ENCODE measurements at regions of chr11 and their contacts with region 1.

Region 1: GRCh38 chr11:126989942-126990715 is 10.4 kb downstream of the KIRREL3 start:
- DNase-seq: peak; percentile 53
- H3K4me3 ChIP-seq: peak overlapping the region in 1 of 3 experiments; percentile 8
- H3K27ac ChIP-seq: peak overlapping the region; percentile 90
- H3K4me1 ChIP-seq: peaks cover 29% of the 10 kb centered on the region
- H3K27me3 ChIP-seq: no peaks in the 10 kb centered on the region
- CTCF ChIP-seq: peak; percentile 95 to 99

Region 2: DNA sequence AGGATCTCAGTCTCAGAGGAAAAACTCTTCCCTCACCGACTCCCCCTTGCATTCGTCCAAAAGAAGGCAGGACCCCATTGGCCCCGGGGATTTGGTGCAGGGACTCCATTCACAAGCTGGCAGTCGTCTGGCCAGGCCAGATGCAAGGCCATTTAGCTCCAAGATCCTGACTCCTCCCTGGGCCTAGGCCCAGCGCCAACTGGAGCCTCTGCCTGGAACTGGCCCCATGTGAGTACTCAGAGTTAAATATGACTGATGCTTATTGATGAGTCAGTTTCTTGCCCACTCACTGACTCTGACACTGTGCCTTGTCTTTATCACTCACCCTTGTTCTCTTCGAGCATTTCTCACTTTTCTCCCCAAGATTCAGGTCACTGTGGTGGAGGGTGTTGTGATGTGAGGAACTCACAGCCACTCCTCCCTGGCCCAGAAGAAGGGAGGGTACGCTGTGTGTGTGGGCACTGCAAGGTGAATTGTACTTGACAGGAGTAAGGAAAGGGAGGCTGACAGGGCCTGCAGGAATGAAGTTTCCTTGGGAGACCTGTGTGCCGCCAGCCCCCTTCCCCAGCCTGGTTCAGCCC is 657.9 kb before region 1 on chr11:
- CTCF ChIA-PET with region 1: no interaction called
- dilution Hi-C with region 1: no loop called
- in situ Hi-C with region 1: loop called in 1 of 2 experiments (anchors 25 kb)
- intact Hi-C with region 1: no loop called
- DNase-seq: peak; percentile 82
- H3K4me3 ChIP-seq: no peak overlapping the region
- H3K27ac ChIP-seq: peak overlapping the region; percentile 15
- H3K4me1 ChIP-seq: peaks cover 13% of the 10 kb centered on the region
- H3K27me3 ChIP-seq: no peaks in the 10 kb centered on the region
- CTCF ChIP-seq: no peak

Region 3: DNA sequence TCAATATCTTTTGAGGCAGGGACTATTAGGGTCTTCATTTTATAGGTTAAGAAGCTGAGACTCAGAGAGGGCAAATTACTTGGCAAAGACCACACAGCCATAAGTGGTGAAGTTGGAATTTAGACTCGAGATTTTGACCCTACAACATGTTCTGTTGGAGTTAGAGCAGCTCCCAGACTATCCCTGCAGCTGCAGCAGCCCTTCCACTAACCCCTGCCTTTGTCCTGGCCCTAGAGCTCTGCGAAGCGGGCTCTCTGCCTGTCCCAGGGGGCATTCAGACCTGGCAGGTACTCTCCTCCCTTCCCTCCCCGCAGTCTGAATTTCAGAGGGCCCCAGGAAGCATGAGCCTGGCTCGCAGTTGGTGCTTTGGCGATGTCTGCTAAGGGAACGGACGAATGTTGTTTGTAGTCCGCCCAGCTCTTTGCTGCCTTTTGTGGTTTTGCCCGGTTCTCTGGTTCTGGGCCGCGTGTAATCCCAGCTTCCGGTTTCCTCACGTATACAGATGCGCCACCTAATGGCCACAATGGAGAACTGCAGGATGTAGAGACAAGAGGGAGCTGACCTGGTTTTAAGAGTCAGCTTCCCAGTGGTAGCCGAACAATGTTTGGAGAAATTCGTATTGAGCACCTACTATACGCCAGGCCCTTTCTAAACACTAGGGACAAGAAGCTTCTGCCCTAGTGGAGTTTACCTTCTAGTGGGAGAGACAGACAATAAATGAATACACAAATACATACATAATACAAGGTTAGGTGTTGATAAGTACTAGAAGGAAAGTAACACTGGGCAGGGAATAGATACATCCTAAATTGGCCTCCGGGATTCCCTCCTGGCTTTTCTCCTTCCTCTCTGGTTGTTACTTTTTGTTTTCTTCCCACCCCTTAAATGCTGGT is 509.5 kb before region 1 on chr11:
- CTCF ChIA-PET with region 1: interaction called, 9 read pairs
- dilution Hi-C with region 1: no loop called
- in situ Hi-C with region 1: loop called in 1 of 2 experiments (anchors 25 kb)
- intact Hi-C with region 1: loop called (anchors 1 kb)
- DNase-seq: peak; percentile 70
- H3K4me3 ChIP-seq: no peak overlapping the region
- H3K27ac ChIP-seq: no peak overlapping the region
- H3K4me1 ChIP-seq: peaks cover 4% of the 10 kb centered on the region
- H3K27me3 ChIP-seq: no peaks in the 10 kb centered on the region
- CTCF ChIP-seq: peak; percentile 94 to 97

Region 4: DNA sequence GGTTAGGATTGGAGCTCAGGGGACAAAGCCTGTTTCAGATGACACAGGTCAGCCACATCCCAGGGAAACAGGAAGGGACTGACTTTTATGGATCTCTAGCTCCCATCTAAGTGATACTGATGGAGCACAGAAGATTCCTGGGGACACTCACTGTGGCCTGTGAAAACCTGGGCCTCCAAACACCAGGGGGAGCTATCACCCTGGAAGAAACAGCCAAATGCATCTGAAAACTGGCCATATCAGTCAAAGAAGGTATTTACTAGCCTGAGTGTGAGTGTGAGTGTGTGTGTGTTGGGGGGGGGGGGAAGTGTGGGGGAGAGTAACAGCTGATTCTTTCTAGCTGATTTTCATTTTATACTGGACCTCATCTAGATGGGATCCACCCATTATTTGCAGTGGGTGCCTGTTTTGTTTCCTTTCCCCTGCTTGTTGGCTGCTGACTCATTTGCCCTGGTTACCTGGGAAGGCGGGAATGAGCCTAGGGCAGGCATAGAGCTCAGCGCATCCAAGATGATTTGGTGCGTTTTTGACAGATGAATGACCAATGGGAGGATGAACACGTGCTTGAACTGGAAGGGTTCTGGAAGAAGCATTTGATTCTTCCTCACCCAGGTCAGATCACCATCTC is 273.6 kb before region 1 on chr11:
- CTCF ChIA-PET with region 1: no interaction called
- dilution Hi-C with region 1: loop called (anchors 25 kb)
- in situ Hi-C with region 1: loop called in 1 of 2 experiments (anchors 25 kb)
- intact Hi-C with region 1: no loop called
- DNase-seq: no peak
- H3K4me3 ChIP-seq: no peak overlapping the region
- H3K27ac ChIP-seq: no peak overlapping the region
- H3K4me1 ChIP-seq: peaks cover 6% of the 10 kb centered on the region
- H3K27me3 ChIP-seq: no peaks in the 10 kb centered on the region
- CTCF ChIP-seq: peak; percentile 57 to 69

Region 5: GRCh38 chr11:127075758-127076157 is 85.6 kb after region 1 on chr11:
- CTCF ChIA-PET with region 1: no interaction called
- dilution Hi-C with region 1: loop called (anchors 5 kb)
- in situ Hi-C with region 1: no loop called
- intact Hi-C with region 1: no loop called
- DNase-seq: no peak
- H3K4me3 ChIP-seq: no peak overlapping the region
- H3K27ac ChIP-seq: no peak overlapping the region
- H3K4me1 ChIP-seq: no peaks in the 10 kb centered on the region
- H3K27me3 ChIP-seq: no peaks in the 10 kb centered on the region
- CTCF ChIP-seq: no peak

Measured in mammary epithelial cell (primary cell).